ENCODE measurements at regions of chrX and their contacts with region 1.

Region 1: GRCh38 chrX:45515262-45516215 is 314.9 kb upstream of the DIPK2B start:
- DNase-seq: peak; percentile 94
- H3K4me3 ChIP-seq: no peak overlapping the region
- H3K27ac ChIP-seq: peak overlapping the region; percentile 47 to 65 (median 60)
- H3K4me1 ChIP-seq: peaks cover 0 to 26% (median 12%) of the 10 kb centered on the region in 4 donors
- H3K27me3 ChIP-seq: no peaks in the 10 kb centered on the region
- CTCF ChIP-seq: peak; percentile 10 to 39 (median 36)
- EP300 ChIP-seq: peak in 2 of 4 donors; percentile 16 to 54
- POLR2A ChIP-seq: no peak

Region 2: DNA sequence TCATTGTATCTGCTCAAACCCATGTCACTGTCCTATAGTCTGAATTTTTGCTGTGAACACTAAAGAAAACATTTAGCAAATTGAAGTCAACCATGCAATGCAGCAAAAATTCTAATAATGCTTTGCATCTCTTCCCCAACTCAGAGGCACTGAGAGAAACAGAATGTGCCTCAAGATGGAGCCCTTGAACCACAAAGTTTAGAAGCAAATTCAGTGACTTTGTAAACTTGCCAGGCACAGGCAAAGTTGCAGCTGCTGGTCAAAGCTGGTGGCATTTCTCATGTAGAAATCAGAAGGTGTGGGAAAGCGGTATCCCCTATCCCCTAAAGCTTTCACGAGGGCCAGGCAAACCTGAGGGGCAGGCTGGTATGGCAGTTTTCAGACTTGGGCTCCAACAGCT is 193.2 kb before region 1 on chrX:
- intact Hi-C with region 1: loop called (anchors 5 kb)
- DNase-seq: peak; percentile 64
- H3K4me3 ChIP-seq: no peak overlapping the region
- H3K27ac ChIP-seq: no peak overlapping the region
- H3K4me1 ChIP-seq: peaks cover 0 to 7% (median 3%) of the 10 kb centered on the region in 4 donors
- H3K27me3 ChIP-seq: no peaks in the 10 kb centered on the region
- CTCF ChIP-seq: peak in 3 of 4 experiments; percentile 26 to 31 (median 28)
- EP300 ChIP-seq: no peak
- POLR2A ChIP-seq: no peak

Region 3: GRCh38 chrX:45749375-45749774 is 233.8 kb after region 1 on chrX:
- intact Hi-C with region 1: loop called (anchors 2 kb)
- DNase-seq: no peak
- H3K4me3 ChIP-seq: no peak overlapping the region
- H3K27ac ChIP-seq: peak overlapping the region in 2 of 4 donors; percentile 56 to 60
- H3K4me1 ChIP-seq: peaks cover 0 to 29% (median 9%) of the 10 kb centered on the region in 4 donors
- H3K27me3 ChIP-seq: no peaks in the 10 kb centered on the region
- CTCF ChIP-seq: peak in 1 of 4 experiments; percentile 6
- EP300 ChIP-seq: no peak
- POLR2A ChIP-seq: no peak

Region 4: DNA sequence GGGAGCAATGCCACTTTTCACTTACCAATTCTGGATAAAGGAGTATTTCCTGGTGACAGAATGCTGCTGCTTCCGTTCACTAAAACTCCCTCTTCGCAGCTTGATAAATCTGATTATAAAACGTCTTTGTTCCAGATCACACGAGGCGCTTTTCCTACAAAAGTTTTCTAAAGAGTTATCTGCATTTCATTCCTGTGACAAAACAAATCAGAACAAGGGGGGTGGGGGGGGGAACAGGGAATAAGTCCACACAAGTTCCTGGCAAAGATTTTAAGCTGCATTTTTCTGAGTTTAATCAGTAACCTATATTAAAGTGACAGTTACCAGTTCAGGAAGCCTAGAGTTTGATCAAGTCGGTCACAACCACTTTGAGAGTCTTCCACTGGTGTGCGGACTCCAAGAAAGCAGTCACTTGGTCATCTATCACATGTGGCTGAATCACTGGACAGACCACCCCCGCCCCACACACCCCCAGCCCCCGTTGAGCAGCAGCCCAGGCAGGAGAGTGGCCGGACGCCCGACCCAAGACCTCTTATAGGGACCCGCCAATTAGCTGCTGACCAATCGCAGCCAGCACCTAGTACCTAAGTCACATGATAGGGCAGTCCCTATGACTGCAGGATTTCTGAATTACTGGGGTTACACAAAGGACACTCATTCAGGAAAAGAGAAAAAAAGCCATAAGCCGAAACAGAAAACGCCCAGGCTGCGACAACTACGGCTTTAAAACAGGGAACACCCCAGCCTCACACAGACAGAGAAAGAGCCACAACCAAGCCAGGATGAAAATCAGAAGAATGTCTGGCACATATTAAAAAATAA is 254.4 kb after region 1 on chrX:
- intact Hi-C with region 1: loop called (anchors 5 kb)
- DNase-seq: peak; percentile 91
- H3K4me3 ChIP-seq: peak overlapping the region; percentile 28 to 47 (median 42)
- H3K27ac ChIP-seq: peak overlapping the region; percentile 66 to 76 (median 72)
- H3K4me1 ChIP-seq: peaks cover 0 to 9% (median 2%) of the 10 kb centered on the region in 4 donors
- H3K27me3 ChIP-seq: no peaks in the 10 kb centered on the region
- CTCF ChIP-seq: no peak
- EP300 ChIP-seq: no peak
- POLR2A ChIP-seq: peak; percentile 33 to 45

Region 5: GRCh38 chrX:46376246-46376885 is 860.8 kb after region 1 on chrX:
- intact Hi-C with region 1: loop called (anchors 10 kb)
- DNase-seq: no peak
- H3K4me3 ChIP-seq: no peak overlapping the region
- H3K27ac ChIP-seq: no peak overlapping the region
- H3K4me1 ChIP-seq: no peaks in the 10 kb centered on the region
- H3K27me3 ChIP-seq: no peaks in the 10 kb centered on the region
- CTCF ChIP-seq: no peak
- EP300 ChIP-seq: no peak
- POLR2A ChIP-seq: no peak

Region 6: DNA sequence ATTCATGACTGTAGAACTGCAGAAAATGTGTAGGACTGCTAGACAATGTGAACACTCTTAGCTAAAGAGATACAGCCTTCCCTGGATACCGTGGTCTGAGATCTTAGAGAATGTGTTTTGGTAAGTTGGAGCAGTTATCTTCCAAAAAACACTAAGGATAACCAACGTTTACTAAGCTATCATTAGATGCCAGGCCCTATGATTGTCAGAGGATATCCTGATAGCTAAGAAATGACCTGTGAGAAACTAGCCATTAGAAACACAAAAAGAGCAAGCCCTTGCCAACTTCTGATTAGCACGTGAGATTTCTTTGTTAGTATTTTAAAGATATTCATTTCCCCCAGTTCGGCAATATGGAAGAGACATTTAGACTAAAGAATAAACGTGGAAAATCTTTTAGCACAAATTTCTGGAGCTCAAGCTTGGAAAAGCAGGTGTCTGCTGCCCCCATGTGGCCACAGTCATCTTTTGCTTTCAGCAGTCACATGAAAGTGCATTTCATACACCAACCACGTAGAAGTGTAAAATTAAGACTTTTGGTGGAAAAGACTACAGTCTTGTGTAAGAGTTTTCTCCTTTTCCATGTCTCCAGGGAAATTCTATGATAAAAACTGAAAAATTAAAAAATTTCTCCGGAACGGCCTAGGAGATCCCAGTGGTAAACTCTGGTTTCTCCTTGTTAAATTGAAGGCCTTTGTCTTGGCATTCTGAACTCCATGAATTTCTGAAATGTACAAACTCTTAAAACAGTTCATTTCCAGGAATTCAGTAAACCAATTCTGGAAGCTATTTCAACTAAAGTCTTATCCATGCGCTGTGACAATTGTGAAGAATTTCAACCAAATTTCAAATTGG is 893.2 kb after region 1 on chrX:
- intact Hi-C with region 1: loop called (anchors 10 kb)
- DNase-seq: peak; percentile 80
- H3K4me3 ChIP-seq: no peak overlapping the region
- H3K27ac ChIP-seq: no peak overlapping the region
- H3K4me1 ChIP-seq: no peaks in the 10 kb centered on the region
- H3K27me3 ChIP-seq: no peaks in the 10 kb centered on the region
- CTCF ChIP-seq: peak; percentile 43 to 59 (median 50)
- EP300 ChIP-seq: no peak
- POLR2A ChIP-seq: no peak

Measured in sigmoid colon (tissue), 7 donors.